ENCODE measurements at regions of chr5 and their contacts with region 1.

Region 1: DNA sequence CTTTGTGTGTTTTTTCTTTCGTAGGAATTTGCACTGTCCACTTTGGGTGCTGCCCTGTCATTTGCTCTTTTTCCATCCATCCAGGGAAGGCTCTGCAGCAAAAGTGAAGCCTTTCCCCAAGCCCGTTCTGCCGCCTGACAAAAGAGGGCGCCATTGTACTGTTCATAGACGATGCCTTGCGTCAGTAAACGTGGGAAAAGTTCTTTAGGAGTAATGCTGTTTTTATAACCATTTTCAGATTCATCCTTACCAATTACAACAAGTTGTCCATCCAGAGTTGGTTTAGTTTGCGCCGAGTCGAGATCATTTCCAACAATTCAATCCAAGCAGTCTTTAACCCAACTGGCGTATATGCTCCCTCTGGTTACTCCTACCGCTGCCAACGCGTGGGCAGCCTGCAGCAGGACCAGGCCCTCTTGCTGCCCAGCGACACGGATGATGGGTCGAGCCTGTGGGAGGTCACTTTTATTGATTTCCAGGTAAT is 34.3 kb upstream of the RPS23 start:
- DNase-seq: peak; percentile 24 to 87
- H3K4me3 ChIP-seq: peak overlapping the region; percentile 10 to 30
- H3K27ac ChIP-seq: peak overlapping the region; percentile 61 to 80
- H3K4me1 ChIP-seq: peaks cover 4 to 9% of the 10 kb centered on the region in 2 donors
- H3K27me3 ChIP-seq: no peaks in the 10 kb centered on the region
- CTCF ChIP-seq: peak; percentile 85 to 91 (median 89)

Region 2: DNA sequence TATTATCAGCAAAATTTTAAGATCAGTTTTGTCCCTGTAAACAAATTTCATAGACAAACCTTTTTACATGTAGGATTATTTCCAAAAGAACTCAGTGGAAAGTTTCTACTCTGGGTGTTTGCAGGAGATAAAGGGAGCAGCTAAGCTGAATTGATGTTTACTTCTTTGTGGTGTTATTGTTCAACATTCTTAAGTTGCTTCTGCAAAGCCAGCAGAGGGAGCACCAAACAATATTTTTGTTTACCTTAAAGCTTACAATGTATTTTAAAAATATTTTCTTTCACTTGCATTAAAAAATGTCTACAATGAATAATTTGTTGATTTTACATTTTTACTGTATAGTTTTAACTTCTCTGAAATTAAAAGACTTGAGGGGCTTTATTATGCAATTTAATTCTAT is 205.1 kb before region 1 on chr5:
- intact Hi-C with region 1: no loop called
- DNase-seq: no peak
- H3K4me3 ChIP-seq: no peak overlapping the region
- H3K27ac ChIP-seq: no peak overlapping the region
- H3K4me1 ChIP-seq: peaks cover 0 to 10% of the 10 kb centered on the region in 2 donors
- H3K27me3 ChIP-seq: no peaks in the 10 kb centered on the region
- CTCF ChIP-seq: no peak

Region 3: DNA sequence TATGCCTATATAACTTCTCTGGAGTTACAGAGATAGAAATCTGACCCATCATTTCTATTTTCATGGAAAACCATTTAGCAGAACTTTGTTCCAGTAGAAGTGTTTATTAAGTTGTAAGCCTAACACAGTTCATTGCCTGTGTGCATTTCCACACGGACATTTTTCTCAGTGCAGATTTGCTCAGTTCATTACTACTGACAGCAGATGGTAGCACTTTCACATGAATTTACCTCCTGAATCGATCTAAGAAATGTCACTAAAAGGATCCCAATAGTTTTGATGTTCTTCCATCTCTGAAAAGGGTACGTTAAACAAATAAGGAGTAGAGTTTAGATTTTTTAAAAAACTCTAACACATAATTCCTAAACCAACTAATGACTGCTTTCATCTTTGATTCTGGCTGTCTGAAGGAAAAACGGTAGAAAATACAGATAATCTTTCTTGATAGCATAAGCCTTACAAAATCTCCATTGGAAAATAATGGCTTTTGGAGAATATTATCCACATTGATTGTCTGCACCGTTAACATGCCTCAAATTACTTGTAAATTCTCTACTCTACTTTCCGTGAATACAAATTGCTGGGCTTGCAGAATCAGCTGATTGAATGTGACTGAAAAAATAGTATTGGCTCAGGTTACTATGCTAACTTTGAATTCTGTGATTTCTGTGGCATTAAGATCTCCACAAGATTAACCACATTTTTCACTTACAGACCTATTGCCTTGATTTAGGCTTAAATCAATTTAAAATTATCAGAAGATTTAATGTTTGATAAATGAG is 67.4 kb before region 1 on chr5:
- intact Hi-C with region 1: no loop called
- DNase-seq: no peak
- H3K4me3 ChIP-seq: no peak overlapping the region
- H3K27ac ChIP-seq: no peak overlapping the region
- H3K4me1 ChIP-seq: no peaks in the 10 kb centered on the region
- H3K27me3 ChIP-seq: no peaks in the 10 kb centered on the region
- CTCF ChIP-seq: peak in 2 of 3 experiments; percentile 13 to 36

Region 4: DNA sequence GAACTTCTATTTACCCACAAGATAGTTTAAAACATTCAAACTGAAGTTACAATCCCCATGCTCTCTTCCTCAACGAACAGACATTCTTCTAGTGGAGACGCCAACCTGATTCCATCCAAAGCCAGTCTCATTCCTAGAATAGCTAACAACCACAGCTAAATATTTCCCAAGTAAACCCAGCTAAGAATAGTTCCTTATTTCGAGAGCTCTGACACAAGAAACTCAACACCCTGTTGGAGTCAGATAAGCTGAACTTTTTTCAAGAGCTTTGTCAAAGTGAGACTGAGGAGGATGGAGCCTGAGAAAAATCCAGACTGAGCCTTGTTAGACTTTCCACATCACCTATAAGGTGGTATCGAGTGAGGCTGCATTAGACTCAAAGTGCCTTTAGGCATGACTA is 22.4 kb after region 1 on chr5:
- intact Hi-C with region 1: loop called (anchors 1 kb)
- DNase-seq: no peak
- H3K4me3 ChIP-seq: no peak overlapping the region
- H3K27ac ChIP-seq: peak overlapping the region; percentile 98 to 99
- H3K4me1 ChIP-seq: peaks cover 21 to 72% of the 10 kb centered on the region in 2 donors
- H3K27me3 ChIP-seq: no peaks in the 10 kb centered on the region
- CTCF ChIP-seq: no peak

Region 5: GRCh38 chr5:82375531-82376244 is 63.3 kb after region 1 on chr5:
- intact Hi-C with region 1: no loop called
- DNase-seq: no peak
- H3K4me3 ChIP-seq: no peak overlapping the region
- H3K27ac ChIP-seq: peak overlapping the region; percentile 31 to 51
- H3K4me1 ChIP-seq: peaks cover 4 to 13% of the 10 kb centered on the region in 2 donors
- H3K27me3 ChIP-seq: no peaks in the 10 kb centered on the region
- CTCF ChIP-seq: no peak

Region 6: DNA sequence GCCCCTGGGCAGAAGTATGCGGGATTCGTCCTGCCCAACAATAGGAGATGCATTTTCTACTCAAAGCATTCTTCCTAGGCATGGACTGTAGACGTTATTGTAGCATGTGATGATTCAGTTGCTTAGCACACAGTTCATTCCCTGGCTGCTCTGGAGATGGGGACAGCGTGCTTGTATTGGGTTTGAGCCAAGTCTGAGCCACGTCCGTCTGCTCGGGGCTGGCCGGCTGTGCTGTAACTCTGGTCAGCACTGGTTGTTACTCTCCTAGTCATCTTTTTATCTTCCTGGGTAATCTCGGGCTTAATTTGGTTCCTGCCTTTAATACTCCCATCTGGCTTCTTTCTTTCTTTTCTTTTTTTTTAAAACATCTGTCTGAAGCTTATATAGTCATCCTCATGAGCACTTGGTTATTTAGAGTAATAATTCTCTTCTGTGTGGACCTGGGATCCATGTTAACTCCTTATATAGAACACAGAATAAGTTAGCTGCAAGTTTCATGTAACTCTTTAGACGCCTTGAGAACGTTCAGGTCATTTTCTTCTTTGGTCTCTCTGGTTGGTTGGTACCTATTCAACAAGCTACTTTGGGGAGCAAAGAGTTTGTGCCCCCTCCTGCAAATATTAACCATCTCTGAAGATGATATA is 84.6 kb after region 1 on chr5:
- intact Hi-C with region 1: loop called (anchors 5 kb)
- DNase-seq: peak; percentile 66 to 95
- H3K4me3 ChIP-seq: no peak overlapping the region
- H3K27ac ChIP-seq: peak overlapping the region; percentile 77 to 80
- H3K4me1 ChIP-seq: peaks cover 4 to 16% of the 10 kb centered on the region in 2 donors
- H3K27me3 ChIP-seq: no peaks in the 10 kb centered on the region
- CTCF ChIP-seq: no peak

Region 7: DNA sequence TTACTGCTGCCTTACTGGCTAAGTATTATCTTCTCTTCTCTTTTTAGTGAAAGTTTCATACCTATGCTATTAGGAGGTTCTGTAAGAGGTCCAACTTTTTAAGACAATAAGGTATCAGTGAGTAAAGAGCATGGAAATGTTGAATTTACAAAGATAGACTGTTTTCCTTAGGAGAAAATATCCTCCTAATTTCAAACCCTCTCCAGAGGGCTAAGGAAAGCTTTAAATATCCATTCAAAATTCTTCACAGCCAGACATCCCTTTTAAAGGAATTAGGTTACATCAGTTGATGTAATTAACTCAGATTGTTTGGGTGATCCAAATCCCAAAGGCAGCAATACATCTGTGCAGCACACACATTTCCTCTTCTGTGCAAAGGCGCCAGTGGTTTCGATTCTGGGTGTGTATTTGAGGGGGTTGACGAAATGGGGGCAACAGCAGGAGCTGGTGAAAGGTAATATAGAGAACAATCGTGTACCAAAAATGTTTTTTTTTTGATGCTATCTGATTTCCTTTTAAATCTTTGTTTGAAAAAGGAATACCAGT is 239.5 kb after region 1 on chr5:
- intact Hi-C with region 1: loop called (anchors 5 kb)
- DNase-seq: no peak
- H3K4me3 ChIP-seq: peak overlapping the region in 1 of 2 donors; percentile 34
- H3K27ac ChIP-seq: peak overlapping the region; percentile 64 to 77
- H3K4me1 ChIP-seq: peaks cover 0 to 15% of the 10 kb centered on the region in 2 donors
- H3K27me3 ChIP-seq: no peaks in the 10 kb centered on the region
- CTCF ChIP-seq: no peak

Region 8: DNA sequence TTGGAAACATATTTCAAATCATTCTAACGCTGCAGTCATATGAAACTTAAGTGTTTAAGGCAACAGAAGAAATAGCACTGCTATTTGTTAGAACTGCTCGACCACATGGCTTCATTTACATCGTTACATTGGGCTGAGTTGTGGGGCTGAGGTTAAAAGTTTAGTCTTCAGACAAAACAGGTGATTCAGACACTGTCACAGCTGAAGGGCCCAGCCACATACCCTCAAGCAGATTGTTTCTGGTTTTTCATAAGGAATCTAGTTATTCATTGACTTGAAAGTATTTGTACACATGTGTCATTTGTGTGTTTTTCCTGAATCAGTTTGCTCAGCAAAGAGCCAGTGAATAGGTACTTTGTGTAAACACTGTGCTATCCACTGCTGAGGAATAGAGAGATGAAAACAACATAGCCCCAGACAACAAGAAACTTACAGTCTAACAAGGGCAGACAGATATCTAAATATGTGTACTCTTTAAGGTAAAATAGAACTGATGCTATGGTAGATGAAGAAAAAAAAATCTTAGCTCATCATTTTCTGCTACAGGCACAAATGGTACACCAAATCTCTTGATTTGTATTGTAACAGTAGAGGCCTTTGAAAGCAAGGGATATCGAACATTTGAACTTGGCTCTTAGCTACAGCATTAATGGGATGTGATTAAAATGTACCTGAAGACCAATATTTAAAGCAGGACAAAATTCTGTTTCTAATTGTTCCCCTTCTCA is 323.3 kb after region 1 on chr5:
- intact Hi-C with region 1: loop called (anchors 5 kb)
- DNase-seq: no peak
- H3K4me3 ChIP-seq: no peak overlapping the region
- H3K27ac ChIP-seq: peak overlapping the region in 1 of 2 donors; percentile 14
- H3K4me1 ChIP-seq: peaks cover 1 to 13% of the 10 kb centered on the region in 2 donors
- H3K27me3 ChIP-seq: no peaks in the 10 kb centered on the region
- CTCF ChIP-seq: no peak

Region 9: GRCh38 chr5:83430130-83431010 is 1118.0 kb after region 1 on chr5:
- intact Hi-C with region 1: loop called (anchors 5 kb)
- DNase-seq: peak in 1 of 2 donors; percentile 77
- H3K4me3 ChIP-seq: no peak overlapping the region
- H3K27ac ChIP-seq: no peak overlapping the region
- H3K4me1 ChIP-seq: peaks cover 0 to 3% of the 10 kb centered on the region in 2 donors
- H3K27me3 ChIP-seq: no peaks in the 10 kb centered on the region
- CTCF ChIP-seq: peak; percentile 54 to 84 (median 83)

Measured in ascending aorta (tissue), 2 donors.